ENCODE measurements at regions of chr17 and their contacts with region 1.

Region 1: GRCh38 chr17:43467981-43468581 is 15.7 kb upstream of the DHX8 start:
- DNase-seq: peak; percentile 86
- H3K4me3 ChIP-seq: no peak overlapping the region
- H3K27ac ChIP-seq: peak overlapping the region; percentile 99
- H3K4me1 ChIP-seq: peaks cover 32% of the 10 kb centered on the region
- H3K27me3 ChIP-seq: no peaks in the 10 kb centered on the region
- CTCF ChIP-seq: peak in 1 of 2 donors; percentile 11

Region 2: GRCh38 chr17:43367737-43368242 is 100.3 kb before region 1 on chr17:
- CTCF ChIA-PET with region 1: no interaction called
- dilution Hi-C with region 1: no loop called
- in situ Hi-C with region 1: no loop called
- intact Hi-C with region 1: loop called (anchors 1 kb)
- DNase-seq: peak; percentile 99
- H3K4me3 ChIP-seq: no peak overlapping the region
- H3K27ac ChIP-seq: peak overlapping the region; percentile 99
- H3K4me1 ChIP-seq: peaks cover 21% of the 10 kb centered on the region
- H3K27me3 ChIP-seq: no peaks in the 10 kb centered on the region
- CTCF ChIP-seq: no peak

Region 3: DNA sequence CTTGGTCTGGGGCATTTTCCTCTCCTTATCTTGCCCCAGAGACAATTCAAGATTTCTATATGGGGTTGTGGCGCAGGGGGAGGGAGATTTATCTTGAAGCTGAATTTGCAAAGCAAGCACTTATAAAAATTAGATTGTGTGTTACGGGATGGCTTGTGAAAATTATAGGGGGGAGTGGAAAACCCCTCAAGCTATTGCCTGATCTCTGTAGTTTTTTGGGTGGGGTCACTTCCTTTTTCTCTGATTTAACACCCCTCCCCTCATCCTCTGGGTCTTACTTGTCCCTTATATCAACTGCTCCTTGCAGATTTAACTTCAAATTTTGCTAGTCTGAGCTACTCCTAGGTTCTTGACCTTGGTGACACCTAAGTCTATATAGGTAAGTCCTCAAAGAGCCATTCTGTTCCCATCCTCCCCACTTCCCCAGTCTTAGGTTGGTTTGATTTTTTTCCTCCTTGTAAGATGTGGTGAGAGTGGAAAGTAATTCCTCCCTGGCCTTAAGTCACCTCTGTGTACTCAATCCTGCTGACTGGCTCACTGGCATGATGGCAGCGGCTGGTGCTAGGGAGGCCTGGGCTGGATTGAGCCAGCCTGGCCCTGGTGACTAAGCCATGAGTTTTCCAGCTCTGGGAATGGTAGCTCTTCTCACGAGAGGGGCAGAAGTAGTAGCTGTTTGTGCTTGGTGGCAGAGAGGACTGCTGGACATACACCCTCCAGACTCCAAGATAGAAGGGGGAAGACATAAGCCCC is 67.0 kb before region 1 on chr17:
- CTCF ChIA-PET with region 1: interaction called, 3 read pairs
- dilution Hi-C with region 1: loop called (anchors 5 kb)
- in situ Hi-C with region 1: loop called (anchors 5 kb)
- intact Hi-C with region 1: loop called (anchors 1 kb)
- DNase-seq: peak; percentile 93
- H3K4me3 ChIP-seq: peak overlapping the region; percentile 73 to 96 (median 82)
- H3K27ac ChIP-seq: peak overlapping the region; percentile 64
- H3K4me1 ChIP-seq: peaks cover 36% of the 10 kb centered on the region
- H3K27me3 ChIP-seq: no peaks in the 10 kb centered on the region
- CTCF ChIP-seq: no peak

Region 4: DNA sequence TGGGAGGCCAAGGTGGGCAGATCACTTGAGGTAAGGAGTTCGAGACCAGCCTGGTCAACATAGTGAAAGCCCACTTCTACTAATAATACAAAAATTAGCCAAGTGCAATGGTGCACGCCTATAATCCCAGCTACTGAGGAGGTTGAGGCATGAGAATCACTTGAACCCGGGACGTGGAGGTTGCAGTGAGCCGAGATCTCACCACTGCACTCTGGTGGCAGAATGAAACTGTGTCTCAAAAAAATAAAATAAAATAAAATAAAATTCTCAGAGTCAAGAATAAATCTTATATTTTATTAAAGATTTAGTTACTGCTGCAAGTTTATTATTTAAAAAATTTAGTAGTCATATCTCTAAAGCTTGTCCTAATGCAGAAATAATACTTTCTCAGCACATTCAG is 39.6 kb before region 1 on chr17:
- CTCF ChIA-PET with region 1: interaction called, 28 read pairs
- dilution Hi-C with region 1: no loop called
- in situ Hi-C with region 1: no loop called
- intact Hi-C with region 1: no loop called
- DNase-seq: no peak
- H3K4me3 ChIP-seq: no peak overlapping the region
- H3K27ac ChIP-seq: no peak overlapping the region
- H3K4me1 ChIP-seq: peaks cover 5% of the 10 kb centered on the region
- H3K27me3 ChIP-seq: no peaks in the 10 kb centered on the region
- CTCF ChIP-seq: peak in 1 of 2 donors; percentile 18

Region 5: DNA sequence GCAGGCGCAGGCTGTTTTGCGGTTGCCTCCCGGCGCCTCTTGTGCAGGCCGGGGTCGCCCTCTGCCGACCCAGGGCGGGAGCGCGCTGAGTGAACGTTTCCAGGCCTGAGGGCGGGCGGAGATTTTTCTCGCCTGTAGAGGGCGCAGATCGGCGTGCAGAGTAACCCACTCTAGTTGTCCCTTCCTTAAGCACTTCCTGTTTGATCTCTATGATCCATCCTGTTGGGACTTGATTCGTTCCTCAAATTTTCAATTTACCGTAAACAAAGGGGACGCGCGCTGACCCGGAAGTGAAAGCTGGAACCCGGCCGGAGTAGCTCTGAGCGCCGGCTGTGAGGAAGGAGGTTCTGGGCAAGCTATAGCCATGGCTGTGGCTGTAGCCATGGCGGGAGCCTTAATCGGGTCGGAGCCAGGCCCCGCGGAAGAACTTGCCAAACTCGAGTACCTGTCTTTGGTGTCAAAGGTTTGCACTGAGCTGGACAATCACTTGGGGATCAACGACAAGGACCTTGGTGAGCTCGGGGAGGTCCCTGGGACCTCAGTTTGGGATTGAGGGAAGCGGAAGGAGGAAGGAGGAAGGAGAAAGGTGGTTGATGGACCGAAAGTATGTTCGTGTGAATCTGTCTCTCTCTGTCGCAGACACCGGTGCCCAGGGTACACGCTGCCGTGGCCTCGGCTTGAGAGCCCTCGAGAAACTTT is 15.7 kb after region 1 on chr17 and contains the start of gene DHX8:
- CTCF ChIA-PET with region 1: interaction called, 22 read pairs
- dilution Hi-C with region 1: no loop called
- in situ Hi-C with region 1: no loop called
- intact Hi-C with region 1: loop called (anchors 1 kb)
- DNase-seq: peak; percentile 98
- H3K4me3 ChIP-seq: peak within 1 kb of the TSS; percentile 67 to 89 (median 78)
- H3K27ac ChIP-seq: peak within 1 kb of the TSS; percentile 80
- H3K4me1 ChIP-seq: peaks cover 15% of the 10 kb centered on the region
- H3K27me3 ChIP-seq: no peaks in the 10 kb centered on the region
- CTCF ChIP-seq: peak; percentile 100
- total RNA-seq, gene DHX8: 41.3 to 58.8 TPM

Measured in mammary epithelial cell (primary cell).